ENCODE measurements at regions of chr12 and their contacts with region 1.

Region 1: GRCh38 chr12:20798561-20798960 is 11.9 kb upstream of the SLCO1B3 start:
- DNase-seq: no peak

Region 2: GRCh38 chr12:19739183-19739776 is 1059.3 kb before region 1 on chr12:
- intact Hi-C with region 1: loop called (anchors 5 kb)
- DNase-seq: no peak

Region 3: GRCh38 chr12:20631711-20632110 is 166.8 kb before region 1 on chr12:
- intact Hi-C with region 1: no loop called
- DNase-seq: no peak

Region 4: DNA sequence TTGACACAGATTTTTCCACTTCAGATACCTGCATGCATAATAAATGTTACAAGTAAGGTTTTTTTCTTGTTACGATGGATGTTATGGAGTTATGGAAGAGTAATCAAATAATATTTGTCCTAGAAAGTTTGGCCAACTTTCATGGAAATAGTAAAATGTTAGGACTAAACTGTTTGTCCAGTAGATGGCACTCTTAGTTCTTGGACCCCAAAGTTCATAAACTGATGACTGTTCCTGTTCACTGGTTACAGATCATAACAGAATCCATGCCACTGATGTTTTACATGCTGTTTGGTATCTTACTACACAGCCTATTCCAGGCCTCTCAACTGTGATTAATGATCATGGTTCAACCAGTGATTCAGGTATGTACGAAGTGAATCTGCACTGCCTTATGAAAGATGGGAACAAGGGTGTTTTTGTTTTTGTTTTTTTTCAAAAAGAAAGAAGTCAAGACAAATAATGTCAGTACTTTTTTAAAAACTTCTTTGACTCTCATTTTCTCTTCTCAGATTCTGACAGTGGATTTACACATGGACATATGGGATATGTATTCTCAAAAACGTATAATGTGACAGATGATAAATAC is 152.2 kb before region 1 on chr12:
- intact Hi-C with region 1: loop called (anchors 10 kb)
- DNase-seq: no peak

Region 5: GRCh38 chr12:20777420-20777819 is 21.1 kb before region 1 on chr12:
- intact Hi-C with region 1: no loop called
- DNase-seq: no peak

Region 6: GRCh38 chr12:20985399-20985798 is 186.8 kb after region 1 on chr12:
- intact Hi-C with region 1: no loop called
- DNase-seq: no peak